ENCODE measurements at regions of chr11 and their contacts with region 1.

Region 1: DNA sequence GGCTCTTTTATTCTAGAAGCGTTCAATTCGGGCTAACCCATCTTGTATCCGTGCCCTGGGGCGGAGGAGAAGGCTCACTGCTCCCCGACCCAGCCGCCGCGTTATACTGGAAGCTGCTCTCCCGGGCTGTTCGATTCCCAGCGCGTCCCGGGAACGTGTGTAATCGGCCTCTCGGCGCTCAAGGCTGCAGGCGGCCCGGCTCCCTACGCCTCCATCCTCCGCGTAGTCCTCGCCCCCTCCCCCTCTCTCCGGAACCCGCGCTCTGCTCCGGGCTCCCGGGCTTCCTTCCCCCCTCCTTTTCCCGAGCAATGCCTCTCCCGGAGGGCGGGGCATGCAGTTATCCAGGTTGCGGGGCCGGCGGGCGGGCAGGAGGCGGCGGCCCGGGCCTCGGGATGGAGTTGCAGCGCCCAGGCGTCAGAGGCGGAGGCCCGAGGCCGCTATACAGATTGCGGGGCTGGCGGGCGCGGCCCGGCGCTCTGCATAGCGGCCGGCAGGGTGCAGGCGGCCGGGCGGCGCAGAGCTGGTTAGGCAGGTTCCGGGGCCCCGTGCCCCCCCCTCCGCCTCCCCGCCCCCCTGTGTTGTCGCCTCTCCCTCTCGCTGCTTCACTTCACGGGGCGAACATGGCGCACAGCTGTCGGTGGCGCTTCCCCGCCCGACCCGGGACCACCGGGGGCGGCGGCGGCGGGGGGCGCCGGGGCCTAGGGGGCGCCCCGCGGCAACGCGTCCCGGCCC is at the start of gene KMT2A:
- DNase-seq: peak; percentile 98
- H3K4me3 ChIP-seq: peak within 1 kb of the TSS; percentile 95
- H3K27ac ChIP-seq: peak within 1 kb of the TSS; percentile 91
- H3K4me1 ChIP-seq: no peaks in the 10 kb centered on the region
- H3K27me3 ChIP-seq: no peaks in the 10 kb centered on the region
- CTCF ChIP-seq: no peak
- total RNA-seq, gene KMT2A: 33.8 to 45.1 TPM

Region 2: GRCh38 chr11:118152552-118153471 is 283.2 kb before region 1 on chr11 and contains the start of gene SCN4B:
- intact Hi-C with region 1: no loop called
- DNase-seq: peak; percentile 55
- H3K4me3 ChIP-seq: peak within 1 kb of the TSS; percentile 41
- H3K27ac ChIP-seq: no peak within 1 kb of the TSS
- H3K4me1 ChIP-seq: peaks cover 6% of the 10 kb centered on the region
- H3K27me3 ChIP-seq: peaks cover 54% of the 10 kb centered on the region
- CTCF ChIP-seq: no peak
- total RNA-seq, gene SCN4B: 0.59 to 1.5 TPM

Region 3: DNA sequence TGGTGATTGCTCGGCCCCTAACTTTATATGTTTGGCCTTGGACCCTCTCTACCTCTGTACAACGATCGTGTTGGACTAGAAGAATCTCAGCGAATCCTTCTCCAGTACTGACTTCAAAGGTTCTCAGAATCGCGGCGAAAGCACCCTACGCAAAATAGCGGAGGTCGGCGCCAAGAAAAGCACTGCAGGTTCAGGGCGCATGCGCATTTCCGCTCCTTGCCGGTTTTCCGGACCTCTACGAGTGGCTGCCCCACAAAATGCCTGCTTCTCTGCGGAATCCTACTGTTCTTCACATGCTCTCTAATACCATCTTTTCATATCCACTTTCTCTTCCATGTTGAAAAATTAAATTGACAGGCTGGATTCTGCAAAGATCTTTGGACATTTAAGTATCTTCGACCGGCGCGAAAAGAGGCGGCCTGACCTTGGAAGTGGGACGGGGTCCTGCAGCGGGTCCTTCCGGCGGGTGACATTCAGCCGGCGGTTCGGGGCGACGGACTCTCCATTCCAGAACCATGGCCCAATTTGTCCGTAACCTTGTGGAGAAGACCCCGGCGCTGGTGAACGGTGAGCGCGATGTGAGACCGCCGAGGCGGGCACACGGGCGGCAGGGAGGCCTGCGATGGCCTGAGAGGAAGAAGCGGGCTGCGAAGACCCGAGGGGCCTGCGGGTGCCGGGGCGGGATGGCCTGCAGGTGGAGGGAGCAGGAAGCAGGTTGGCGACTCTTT is 34.7 kb before region 1 on chr11 and contains the start of gene ATP5MG:
- intact Hi-C with region 1: loop called (anchors 5 kb)
- DNase-seq: peak; percentile 94
- H3K4me3 ChIP-seq: peak within 1 kb of the TSS; percentile 98
- H3K27ac ChIP-seq: peak within 1 kb of the TSS; percentile 81
- H3K4me1 ChIP-seq: peaks cover 4% of the 10 kb centered on the region
- H3K27me3 ChIP-seq: no peaks in the 10 kb centered on the region
- CTCF ChIP-seq: no peak
- total RNA-seq, gene ATP5MG: 282 to 380 TPM